GM12878 (cell line): ENCODE measurements at regions of chr3 and their contacts with region 1.

Region 1: GRCh38 chr3:46987743-46988401 is 8.4 kb downstream of the NBEAL2 start:
- DNase-seq: peak; percentile 63
- ATAC-seq: peak; percentile 85
- H3K4me3 ChIP-seq: peak overlapping the region; percentile 57
- H3K27ac ChIP-seq: peak overlapping the region; percentile 98
- H3K4me1 ChIP-seq: peaks cover 62% of the 10 kb centered on the region
- H3K27me3 ChIP-seq: no peaks in the 10 kb centered on the region
- CTCF ChIP-seq: no peak
- EP300 ChIP-seq: 0 out of 4 replicates have a peak, but pooled peaks of 1 of the 2 experiments have one; percentile 51
- POLR2A ChIP-seq: peak; percentile 68
- RAD21 ChIP-seq: no peak

Region 2: GRCh38 chr3:46395210-46395731 is 592.6 kb before region 1 on chr3:
- CTCF ChIA-PET with region 1: no interaction called
- POLR2A ChIA-PET with region 1: no interaction called
- RAD21 ChIA-PET with region 1: no interaction called
- SMC1A ChIA-PET with region 1: no interaction called
- in situ Hi-C with region 1: no loop called
- intact Hi-C with region 1: no loop called
- DNase-seq: no peak
- ATAC-seq: 0 out of 3 replicates have a peak, but pooled peaks have one; percentile 20
- H3K4me3 ChIP-seq: no peak overlapping the region
- H3K27ac ChIP-seq: no peak overlapping the region
- H3K4me1 ChIP-seq: peaks cover 20% of the 10 kb centered on the region
- H3K27me3 ChIP-seq: no peaks in the 10 kb centered on the region; a peak in 1 of 4 replicates
- CTCF ChIP-seq: peak in 1 of 3 experiments; percentile 27; a peak in 1 of 6 replicates
- EP300 ChIP-seq: no peak
- POLR2A ChIP-seq: no peak
- RAD21 ChIP-seq: no peak

Region 3: DNA sequence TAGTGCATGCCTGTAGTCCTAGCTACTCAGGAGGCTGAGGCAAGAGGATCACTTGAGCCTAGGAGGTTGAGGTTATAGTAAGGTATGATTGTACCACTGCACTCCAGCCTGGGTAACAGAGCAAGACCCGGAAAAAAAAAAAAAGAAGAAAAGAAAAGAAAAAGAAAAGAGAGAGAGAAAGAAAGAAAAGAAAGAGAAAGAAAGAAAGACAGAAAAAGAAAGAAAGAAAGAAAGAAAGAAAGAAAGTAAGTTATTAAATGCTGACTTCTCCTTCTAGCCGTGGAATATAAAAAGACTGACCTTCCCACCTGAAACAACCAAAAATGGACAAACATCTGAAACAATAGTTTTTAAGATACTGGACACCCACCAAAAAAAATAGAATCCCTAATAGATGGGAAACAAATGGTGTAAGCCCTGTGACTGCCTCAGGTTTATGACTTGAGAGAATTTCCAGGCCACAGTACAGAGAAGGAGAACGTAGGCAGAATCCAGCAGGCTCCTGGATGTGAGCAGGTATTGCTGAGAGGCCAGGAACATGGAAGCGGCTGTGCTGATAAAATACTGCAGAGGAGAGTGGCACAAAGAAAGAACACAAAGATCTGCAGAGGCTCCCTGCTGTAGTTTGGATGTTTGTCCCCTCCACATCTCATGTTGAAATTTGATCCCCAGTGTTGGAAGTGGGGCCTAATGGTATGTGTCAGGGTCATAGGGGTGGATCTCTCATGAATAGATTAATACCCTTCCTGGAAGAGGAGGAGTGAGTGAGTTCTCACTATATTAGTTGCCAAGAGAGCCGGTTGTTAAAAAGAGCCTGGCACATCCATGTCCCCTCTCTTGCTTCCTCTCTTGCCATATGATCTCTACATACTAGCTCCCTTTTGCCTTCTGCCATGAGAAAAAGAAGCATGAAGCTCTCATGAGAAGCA is 228.4 kb before region 1 on chr3:
- CTCF ChIA-PET with region 1: no interaction called
- POLR2A ChIA-PET with region 1: no interaction called
- RAD21 ChIA-PET with region 1: no interaction called
- SMC1A ChIA-PET with region 1: no interaction called
- in situ Hi-C with region 1: no loop called
- intact Hi-C with region 1: no loop called
- DNase-seq: no peak
- ATAC-seq: no peak
- H3K4me3 ChIP-seq: no peak overlapping the region
- H3K27ac ChIP-seq: no peak overlapping the region
- H3K4me1 ChIP-seq: no peaks in the 10 kb centered on the region
- H3K27me3 ChIP-seq: no peaks in the 10 kb centered on the region
- CTCF ChIP-seq: no peak
- EP300 ChIP-seq: no peak
- POLR2A ChIP-seq: no peak
- RAD21 ChIP-seq: no peak

Region 4: GRCh38 chr3:46976326-46977190 is 11.3 kb before region 1 on chr3 and contains the start of gene CCDC12:
- CTCF ChIA-PET with region 1: interaction called, 4 read pairs
- POLR2A ChIA-PET with region 1: interaction called, 10 read pairs
- RAD21 ChIA-PET with region 1: interaction called, 5 read pairs
- SMC1A ChIA-PET with region 1: interaction called, 8 read pairs
- in situ Hi-C with region 1: no loop called
- intact Hi-C with region 1: loop called (anchors 1 kb)
- DNase-seq: peak; percentile 94
- ATAC-seq: peak; percentile 82
- H3K4me3 ChIP-seq: peak within 1 kb of the TSS; percentile 95
- H3K27ac ChIP-seq: peak within 1 kb of the TSS; percentile 91
- H3K4me1 ChIP-seq: peaks cover 32% of the 10 kb centered on the region
- H3K27me3 ChIP-seq: no peaks in the 10 kb centered on the region
- CTCF ChIP-seq: no peak
- EP300 ChIP-seq: no peak
- POLR2A ChIP-seq: peak; percentile 94
- RAD21 ChIP-seq: no peak
- polyA plus RNA-seq, gene CCDC12: 9.2 to 22.5 TPM